Activated naive CD4-positive, alpha-beta T cell treated with anti-CD3 and anti-CD28 coated beads for 36 hours (primary cell): ENCODE measurements at regions of chr15 and their contacts with region 1.

Region 1: DNA sequence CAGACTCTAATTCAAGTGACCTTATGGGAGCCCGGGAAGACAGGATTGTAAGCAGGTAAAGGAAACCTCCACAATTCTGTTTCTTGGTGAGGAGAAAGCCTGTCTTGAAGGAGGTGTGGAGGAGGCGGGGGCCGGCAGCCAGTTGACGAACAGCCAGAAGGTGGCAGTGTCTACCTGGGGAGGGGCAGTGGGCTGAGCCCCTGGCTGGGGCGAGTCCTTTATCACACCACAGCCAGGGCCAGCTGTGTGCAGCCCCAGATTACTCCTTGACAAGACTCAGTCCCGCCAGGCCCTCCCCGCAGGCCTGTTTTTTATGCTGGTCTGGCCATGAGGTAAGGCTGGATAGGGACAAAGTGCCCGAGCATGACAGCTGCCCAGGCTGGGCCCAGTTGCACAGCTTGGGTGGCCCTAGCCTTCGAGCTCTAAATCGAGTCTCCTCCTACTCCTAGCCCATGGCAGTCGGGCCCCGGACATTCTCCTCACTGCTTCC is 40.9 kb upstream of the IDH2 start:
- DNase-seq: peak; percentile 86
- H3K4me3 Mint-ChIP-seq: peak overlapping the region; percentile 24
- H3K27ac Mint-ChIP-seq: no peak overlapping the region
- H3K4me1 Mint-ChIP-seq: peaks cover 21% of the 10 kb centered on the region
- H3K27me3 Mint-ChIP-seq: no peaks in the 10 kb centered on the region

Region 2: GRCh38 chr15:90101969-90102890 is 41.0 kb before region 1 on chr15 and contains the start of gene IDH2:
- CTCF ChIA-PET with region 1: interaction called, 8 read pairs
- intact Hi-C with region 1: loop called (anchors 2 kb)
- DNase-seq: peak; percentile 64
- H3K4me3 Mint-ChIP-seq: peak within 1 kb of the TSS; percentile 91
- H3K27ac Mint-ChIP-seq: peak within 1 kb of the TSS; percentile 90
- H3K4me1 Mint-ChIP-seq: peaks cover 46% of the 10 kb centered on the region
- H3K27me3 Mint-ChIP-seq: no peaks in the 10 kb centered on the region
- total RNA-seq, gene IDH2: 225 to 229 TPM

Region 3: GRCh38 chr15:90221246-90221900 is 78.2 kb after region 1 on chr15:
- CTCF ChIA-PET with region 1: interaction called, 12 read pairs
- intact Hi-C with region 1: loop called (anchors 1 kb)
- DNase-seq: peak; percentile 58
- H3K4me3 Mint-ChIP-seq: no peak overlapping the region
- H3K27ac Mint-ChIP-seq: no peak overlapping the region
- H3K4me1 Mint-ChIP-seq: peaks cover 2% of the 10 kb centered on the region
- H3K27me3 Mint-ChIP-seq: no peaks in the 10 kb centered on the region

Region 4: DNA sequence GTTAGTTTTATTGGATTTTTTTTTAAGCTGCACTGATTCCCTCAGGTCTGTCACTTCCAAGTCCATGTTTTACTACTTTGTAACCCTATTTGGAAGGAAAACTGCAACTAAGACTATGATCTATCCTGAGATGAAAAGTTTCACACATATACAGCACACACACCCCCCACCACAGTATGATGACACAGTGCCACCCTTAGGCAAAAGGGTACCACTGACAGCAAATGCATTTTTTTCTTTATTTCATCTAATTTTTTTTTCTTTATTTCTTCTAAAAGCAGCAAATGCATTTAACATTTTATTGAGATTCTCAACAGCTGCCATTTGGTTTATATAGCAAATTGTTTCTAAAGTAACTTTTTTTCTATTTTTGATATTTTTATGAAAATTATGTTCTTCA is 143.5 kb after region 1 on chr15:
- CTCF ChIA-PET with region 1: interaction called, 3 read pairs
- intact Hi-C with region 1: loop called (anchors 1 kb)
- DNase-seq: peak; percentile 62
- H3K4me3 Mint-ChIP-seq: no peak overlapping the region
- H3K27ac Mint-ChIP-seq: no peak overlapping the region
- H3K4me1 Mint-ChIP-seq: no peaks in the 10 kb centered on the region
- H3K27me3 Mint-ChIP-seq: no peaks in the 10 kb centered on the region

Region 5: GRCh38 chr15:90400406-90401314 is 257.4 kb after region 1 on chr15:
- CTCF ChIA-PET with region 1: no interaction called
- intact Hi-C with region 1: no loop called
- DNase-seq: peak; percentile 74
- H3K4me3 Mint-ChIP-seq: peak overlapping the region; percentile 59
- H3K27ac Mint-ChIP-seq: peak overlapping the region; percentile 91
- H3K4me1 Mint-ChIP-seq: peaks cover 62% of the 10 kb centered on the region
- H3K27me3 Mint-ChIP-seq: no peaks in the 10 kb centered on the region

Region 6: GRCh38 chr15:90482124-90483011 is 339.2 kb after region 1 on chr15:
- CTCF ChIA-PET with region 1: no interaction called
- intact Hi-C with region 1: loop called (anchors 10 kb)
- DNase-seq: peak; percentile 74
- H3K4me3 Mint-ChIP-seq: no peak overlapping the region
- H3K27ac Mint-ChIP-seq: no peak overlapping the region
- H3K4me1 Mint-ChIP-seq: peaks cover 16% of the 10 kb centered on the region
- H3K27me3 Mint-ChIP-seq: no peaks in the 10 kb centered on the region

Region 7: GRCh38 chr15:90529371-90530249 is 386.4 kb after region 1 on chr15 and contains the start of gene CRTC3:
- CTCF ChIA-PET with region 1: no interaction called
- intact Hi-C with region 1: no loop called
- DNase-seq: peak; percentile 63
- H3K4me3 Mint-ChIP-seq: peak within 1 kb of the TSS; percentile 92
- H3K27ac Mint-ChIP-seq: peak within 1 kb of the TSS; percentile 89
- H3K4me1 Mint-ChIP-seq: peaks cover 42% of the 10 kb centered on the region
- H3K27me3 Mint-ChIP-seq: no peaks in the 10 kb centered on the region
- total RNA-seq, gene CRTC3: 40.6 to 42.7 TPM